HEK293 (cell line): ENCODE measurements at regions of chr22 and their contacts with region 1.

Region 1: DNA sequence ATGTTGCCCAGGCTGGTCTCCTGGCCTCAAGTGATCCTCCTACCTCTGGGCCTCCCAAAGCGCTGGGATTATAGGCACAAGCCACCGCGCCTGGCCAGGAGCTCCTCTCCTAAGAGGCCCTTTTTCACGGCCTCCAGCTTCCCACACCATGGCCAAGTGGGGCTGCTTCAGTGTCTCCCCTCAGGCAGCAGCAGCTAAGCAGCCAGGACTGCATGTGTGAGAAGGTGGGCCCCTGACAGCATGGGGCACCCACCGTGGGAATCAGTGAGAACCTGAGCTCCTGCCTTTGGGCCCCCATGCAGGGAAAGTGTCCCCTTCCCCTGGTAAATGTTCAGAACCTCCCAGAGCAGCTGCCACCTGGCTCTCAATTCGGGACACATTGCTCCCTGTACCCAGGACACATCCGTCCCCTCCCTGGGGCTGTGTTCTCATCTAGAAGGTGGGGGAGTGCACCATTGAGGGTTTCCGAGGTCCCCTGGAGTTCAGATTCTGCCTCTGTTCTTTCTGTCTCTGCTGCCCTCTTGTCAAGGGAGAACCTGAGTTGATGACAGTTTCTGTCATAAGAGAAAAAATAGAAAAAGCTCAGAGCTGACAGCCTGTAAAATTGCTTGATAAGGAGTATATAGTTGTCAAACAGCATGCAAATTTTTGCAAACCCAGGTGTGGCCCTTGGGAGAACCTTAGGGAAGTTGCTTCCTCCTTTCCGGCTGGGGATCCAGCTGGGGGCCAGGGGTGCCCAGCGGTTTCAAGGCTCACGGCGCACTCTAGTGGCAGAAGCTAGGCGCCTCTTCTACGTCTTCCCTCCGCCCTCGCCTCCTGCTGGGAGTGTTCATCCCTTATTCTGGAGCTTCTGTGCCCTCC is 29.7 kb downstream of the FAM83F start:
- H3K4me3 ChIP-seq: no peak overlapping the region
- H3K27ac ChIP-seq: no peak overlapping the region
- H3K4me1 ChIP-seq: no peaks in the 10 kb centered on the region
- CTCF ChIP-seq: peak; percentile 95

Region 2: GRCh38 chr22:39428578-39429071 is 595.8 kb before region 1 on chr22:
- CTCF ChIA-PET with region 1: no interaction called
- POLR2A ChIA-PET with region 1: no interaction called
- H3K4me3 ChIP-seq: no peak overlapping the region
- H3K27ac ChIP-seq: 0 out of 2 replicates have a peak overlapping the region, but pooled peaks have one; percentile 16
- H3K4me1 ChIP-seq: no peaks in the 10 kb centered on the region
- CTCF ChIP-seq: no peak

Region 3: DNA sequence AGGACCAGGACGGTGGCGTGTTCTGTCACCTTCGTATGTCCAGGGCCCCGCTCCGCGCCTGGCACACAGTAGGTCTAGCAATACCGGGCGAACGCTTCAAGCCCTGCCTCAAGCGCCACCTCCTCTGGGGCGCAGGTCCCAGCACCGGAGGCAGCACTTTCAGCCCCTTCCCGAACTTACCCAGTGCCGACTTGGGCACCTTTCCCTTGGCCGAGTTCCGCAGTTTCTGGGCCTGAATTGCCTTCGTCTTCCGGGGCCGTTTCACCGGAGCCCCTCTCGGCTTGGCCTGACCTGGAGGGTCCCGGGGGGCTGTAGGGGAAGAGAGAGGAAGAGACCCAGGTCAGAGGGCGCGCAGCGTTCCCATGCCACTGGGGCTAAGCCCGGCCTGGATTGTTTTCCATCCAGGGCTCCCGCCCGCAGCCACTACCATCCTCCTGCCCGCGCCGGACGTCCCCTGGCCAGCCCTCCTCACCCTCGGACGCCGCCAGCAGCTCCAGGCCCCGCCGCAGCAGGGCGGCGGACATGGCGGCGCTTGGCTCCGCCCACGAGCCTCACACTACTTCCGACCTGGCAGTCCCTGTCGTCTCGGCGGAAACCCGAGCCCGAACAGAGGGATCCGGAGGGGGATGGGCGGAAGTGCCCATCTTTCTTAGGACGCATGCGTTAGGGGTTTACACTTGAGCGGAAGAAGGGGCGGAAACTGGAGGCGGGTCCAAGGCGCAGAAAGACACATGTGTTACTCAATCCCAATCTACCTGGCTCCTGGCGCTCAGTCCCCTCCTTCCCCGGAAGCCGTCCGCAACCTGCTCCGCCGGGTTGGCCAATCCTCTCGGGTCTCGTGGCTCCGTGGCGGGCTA is 492.0 kb before region 1 on chr22 and contains the start of gene RPS19BP1:
- CTCF ChIA-PET with region 1: interaction called, 109 read pairs
- POLR2A ChIA-PET with region 1: no interaction called
- H3K4me3 ChIP-seq: peak within 1 kb of the TSS; percentile 75
- H3K27ac ChIP-seq: peak within 1 kb of the TSS; percentile 79
- H3K4me1 ChIP-seq: peaks cover 14% of the 10 kb centered on the region
- CTCF ChIP-seq: peak; percentile 13; the same call in 1 of the 2 replicates

Region 4: GRCh38 chr22:39559454-39560105 is 464.9 kb before region 1 on chr22:
- CTCF ChIA-PET with region 1: interaction called, 18 read pairs
- POLR2A ChIA-PET with region 1: no interaction called
- H3K4me3 ChIP-seq: no peak overlapping the region
- H3K27ac ChIP-seq: no peak overlapping the region
- H3K4me1 ChIP-seq: no peaks in the 10 kb centered on the region
- CTCF ChIP-seq: peak; percentile 41; the same call in 1 of the 2 replicates

Region 5: GRCh38 chr22:39808081-39808480 is 216.3 kb before region 1 on chr22:
- CTCF ChIA-PET with region 1: interaction called, 15 read pairs
- POLR2A ChIA-PET with region 1: no interaction called
- H3K4me3 ChIP-seq: no peak overlapping the region
- H3K27ac ChIP-seq: no peak overlapping the region
- H3K4me1 ChIP-seq: no peaks in the 10 kb centered on the region
- CTCF ChIP-seq: no peak

Region 6: GRCh38 chr22:39999144-39999757 is 25.2 kb before region 1 on chr22:
- CTCF ChIA-PET with region 1: interaction called, 22 read pairs
- POLR2A ChIA-PET with region 1: no interaction called
- H3K4me3 ChIP-seq: no peak overlapping the region
- H3K27ac ChIP-seq: no peak overlapping the region
- H3K4me1 ChIP-seq: 0 out of 2 replicates have a peak, but pooled peaks cover 8% of the 10 kb centered on the region
- CTCF ChIP-seq: no peak

Region 7: GRCh38 chr22:40044102-40044869 is 19.9 kb after region 1 on chr22:
- CTCF ChIA-PET with region 1: interaction called, 50 read pairs
- POLR2A ChIA-PET with region 1: interaction called, 3 read pairs
- H3K4me3 ChIP-seq: peak overlapping the region; percentile 99
- H3K27ac ChIP-seq: peak overlapping the region; percentile 72
- H3K4me1 ChIP-seq: peaks cover 20% of the 10 kb centered on the region
- CTCF ChIP-seq: no peak

Region 8: GRCh38 chr22:40055143-40055883 is 30.9 kb after region 1 on chr22:
- CTCF ChIA-PET with region 1: no interaction called
- POLR2A ChIA-PET with region 1: no interaction called
- H3K4me3 ChIP-seq: no peak overlapping the region
- H3K27ac ChIP-seq: no peak overlapping the region
- H3K4me1 ChIP-seq: peaks cover 19% of the 10 kb centered on the region
- CTCF ChIP-seq: no peak

Region 9: GRCh38 chr22:40177738-40178416 is 153.4 kb after region 1 on chr22 and contains the start of gene TNRC6B:
- CTCF ChIA-PET with region 1: no interaction called
- POLR2A ChIA-PET with region 1: no interaction called
- H3K4me3 ChIP-seq: peak within 1 kb of the TSS; percentile 76
- H3K27ac ChIP-seq: peak within 1 kb of the TSS; percentile 73
- H3K4me1 ChIP-seq: peaks cover 23% of the 10 kb centered on the region
- CTCF ChIP-seq: no peak